ENCODE measurements at regions of chr16 and their contacts with region 1.

Region 1: GRCh38 chr16:1909561-1910231 is 8.5 kb downstream of the HS3ST6 start:
- DNase-seq: peak in 1 of 2 donors; percentile 27
- H3K4me3 ChIP-seq: no peak overlapping the region
- CTCF ChIP-seq: no peak
- POLR2A ChIP-seq: no peak

Region 2: GRCh38 chr16:1950047-1950446 is 40.4 kb after region 1 on chr16:
- intact Hi-C with region 1: loop called (anchors 2 kb)
- DNase-seq: no peak
- H3K4me3 ChIP-seq: no peak overlapping the region
- CTCF ChIP-seq: no peak
- POLR2A ChIP-seq: no peak

Measured in lower leg skin (tissue), 4 donors.